Vagina (tissue), 2 donors: ENCODE measurements at regions of chr7 and their contacts with region 1.

Region 1: GRCh38 chr7:1488016-1488415 is 16.2 kb downstream of the INTS1 start:
- DNase-seq: no peak
- H3K4me3 ChIP-seq: no peak overlapping the region
- H3K27ac ChIP-seq: no peak overlapping the region
- H3K4me1 ChIP-seq: no peaks in the 10 kb centered on the region
- H3K27me3 ChIP-seq: no peaks in the 10 kb centered on the region
- CTCF ChIP-seq: no peak
- POLR2A ChIP-seq: no peak

Region 2: DNA sequence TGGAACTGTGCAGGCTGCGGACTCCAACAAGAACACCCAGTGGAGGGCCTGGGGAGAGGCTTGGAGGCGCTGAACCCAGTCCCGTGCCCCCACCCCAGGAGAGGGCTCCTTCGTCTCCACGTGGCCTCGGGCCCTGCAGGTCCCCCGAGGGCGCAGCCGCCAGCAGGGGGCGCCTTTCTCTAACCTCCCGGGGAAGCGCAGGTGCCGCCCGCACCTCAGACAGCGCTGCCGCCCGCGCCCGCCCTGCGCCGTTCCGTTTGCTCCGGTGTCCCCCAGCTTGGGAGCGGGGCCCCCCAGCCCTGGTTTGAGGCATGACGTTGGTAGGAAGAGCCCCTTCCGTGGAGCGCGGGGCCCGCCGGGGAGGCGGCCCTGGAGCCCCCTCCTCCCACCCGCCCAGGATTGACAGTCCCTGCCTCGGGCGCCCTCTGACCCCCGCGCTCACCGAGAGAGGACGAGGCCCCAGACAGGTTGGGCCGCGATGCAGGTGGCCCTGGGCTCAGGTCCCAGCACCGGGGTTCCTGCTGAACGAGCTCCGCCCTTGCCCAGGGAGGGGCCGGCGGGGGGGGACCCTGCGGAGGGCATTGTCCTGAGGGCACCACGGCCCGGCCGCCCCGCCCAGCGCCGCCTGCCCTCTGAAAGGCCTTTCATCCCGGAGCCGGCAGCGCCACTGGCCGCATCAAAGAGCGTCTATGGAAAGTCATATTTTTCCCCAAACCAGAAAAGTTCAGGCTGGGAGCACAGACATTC is 1155.2 kb before region 1 on chr7:
- intact Hi-C with region 1: loop called (anchors 5 kb)
- DNase-seq: no peak
- H3K4me3 ChIP-seq: peak overlapping the region; percentile 28 to 35
- H3K27ac ChIP-seq: peak overlapping the region; percentile 26
- H3K4me1 ChIP-seq: peaks cover 14% of the 10 kb centered on the region
- H3K27me3 ChIP-seq: no peaks in the 10 kb centered on the region
- CTCF ChIP-seq: peak; percentile 29 to 80 (median 62)
- POLR2A ChIP-seq: no peak

Region 3: GRCh38 chr7:1473864-1474512 is 14.0 kb before region 1 on chr7:
- intact Hi-C with region 1: no loop called
- DNase-seq: no peak
- H3K4me3 ChIP-seq: no peak overlapping the region
- H3K27ac ChIP-seq: no peak overlapping the region
- H3K4me1 ChIP-seq: peaks cover 11% of the 10 kb centered on the region
- H3K27me3 ChIP-seq: no peaks in the 10 kb centered on the region
- CTCF ChIP-seq: peak; percentile 58 to 90 (median 76)
- POLR2A ChIP-seq: no peak